ENCODE measurements at regions of chr7 and their contacts with region 1.

Region 1: GRCh38 chr7:27576360-27576944 is 86.2 kb downstream of the HIBADH start:
- DNase-seq: no peak
- ATAC-seq: no peak

Region 2: DNA sequence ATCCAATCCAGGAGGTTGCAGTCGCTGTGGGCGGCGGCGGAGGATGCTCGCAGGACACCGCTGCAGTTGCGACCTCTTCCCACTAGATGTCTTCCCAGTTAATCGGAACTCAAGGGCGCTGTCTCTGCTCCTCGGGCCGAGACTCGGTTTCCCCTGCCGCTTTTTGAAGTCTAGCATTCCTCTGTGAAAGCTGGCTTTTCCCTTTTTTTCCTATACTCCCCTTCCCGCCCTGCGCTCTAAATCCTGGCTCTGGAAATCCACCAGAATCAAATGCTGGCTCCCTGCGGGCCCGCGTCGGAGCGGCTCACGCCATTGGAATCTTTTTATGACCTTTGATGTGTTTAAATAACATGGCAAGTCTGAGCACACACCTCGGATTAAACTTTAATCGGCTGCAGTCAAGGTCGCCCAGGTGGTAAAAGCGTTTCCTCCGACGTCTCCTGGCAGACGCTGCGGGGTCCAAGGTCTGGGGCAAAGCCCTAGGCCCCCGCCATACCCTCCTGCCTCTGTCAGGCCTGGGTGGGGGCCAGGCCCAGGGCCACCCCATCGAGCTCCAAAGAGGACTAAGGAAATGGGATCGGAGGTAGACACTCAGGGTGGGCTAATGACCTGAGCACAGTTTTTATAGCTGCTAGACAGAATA is 365.9 kb before region 1 on chr7:
- intact Hi-C with region 1: loop called (anchors 10 kb)
- DNase-seq: peak; percentile 83
- ATAC-seq: peak; percentile 81

Region 3: GRCh38 chr7:28378574-28379149 is 802.2 kb after region 1 on chr7:
- intact Hi-C with region 1: no loop called
- DNase-seq: no peak
- ATAC-seq: no peak

Measured in sciatic nerve (tissue), 2 donors.